Tibial artery (tissue), 4 donors: ENCODE measurements at regions of chr11 and their contacts with region 1.

Region 1: GRCh38 chr11:78715639-78716311 is 141.1 kb upstream of the NARS2 start:
- DNase-seq: peak; percentile 38 to 73
- H3K4me3 ChIP-seq: no peak overlapping the region
- H3K27ac ChIP-seq: no peak overlapping the region
- H3K4me1 ChIP-seq: no peaks in the 10 kb centered on the region
- H3K27me3 ChIP-seq: no peaks in the 10 kb centered on the region
- CTCF ChIP-seq: peak; percentile 77 to 79

Region 2: DNA sequence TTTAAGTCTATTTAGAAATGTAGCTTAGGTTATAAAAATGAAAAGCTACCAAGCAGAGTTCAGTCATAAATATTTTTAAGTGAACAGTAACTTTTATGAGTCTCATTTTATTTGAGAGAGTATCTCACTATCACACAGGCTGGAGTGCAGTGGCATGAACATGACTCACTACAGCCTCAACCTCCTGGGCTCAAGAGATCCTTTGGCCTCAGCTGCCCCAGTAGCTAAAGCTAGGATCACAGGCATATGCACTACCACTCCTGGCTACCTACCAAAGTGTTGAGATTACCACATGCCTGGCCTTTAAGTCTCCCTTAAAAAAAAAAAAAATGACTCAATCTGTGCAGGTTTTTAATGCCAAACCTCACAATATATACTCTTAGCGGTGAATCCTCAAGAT is 1043.5 kb before region 1 on chr11:
- intact Hi-C with region 1: no loop called
- DNase-seq: no peak
- H3K4me3 ChIP-seq: no peak overlapping the region
- H3K27ac ChIP-seq: no peak overlapping the region
- H3K4me1 ChIP-seq: no peaks in the 10 kb centered on the region
- H3K27me3 ChIP-seq: no peaks in the 10 kb centered on the region
- CTCF ChIP-seq: no peak

Region 3: GRCh38 chr11:78645226-78646202 is 70.3 kb before region 1 on chr11:
- intact Hi-C with region 1: loop called (anchors 2 kb)
- DNase-seq: peak; percentile 53 to 78
- H3K4me3 ChIP-seq: no peak overlapping the region
- H3K27ac ChIP-seq: no peak overlapping the region
- H3K4me1 ChIP-seq: no peaks in the 10 kb centered on the region
- H3K27me3 ChIP-seq: peaks cover 0 to 3% of the 10 kb centered on the region in 2 donors
- CTCF ChIP-seq: peak; percentile 90 to 96

Region 4: GRCh38 chr11:78698612-78699011 is 17.2 kb before region 1 on chr11:
- intact Hi-C with region 1: no loop called
- DNase-seq: peak; percentile 78 to 94
- H3K4me3 ChIP-seq: no peak overlapping the region
- H3K27ac ChIP-seq: peak overlapping the region; percentile 55 to 60
- H3K4me1 ChIP-seq: peaks cover 0 to 51% (median 11%) of the 10 kb centered on the region in 4 donors
- H3K27me3 ChIP-seq: no peaks in the 10 kb centered on the region
- CTCF ChIP-seq: no peak